Right ventricle myocardium inferior (tissue), 1 donor: ENCODE measurements at regions of chr2 and their contacts with region 1.

Region 1: DNA sequence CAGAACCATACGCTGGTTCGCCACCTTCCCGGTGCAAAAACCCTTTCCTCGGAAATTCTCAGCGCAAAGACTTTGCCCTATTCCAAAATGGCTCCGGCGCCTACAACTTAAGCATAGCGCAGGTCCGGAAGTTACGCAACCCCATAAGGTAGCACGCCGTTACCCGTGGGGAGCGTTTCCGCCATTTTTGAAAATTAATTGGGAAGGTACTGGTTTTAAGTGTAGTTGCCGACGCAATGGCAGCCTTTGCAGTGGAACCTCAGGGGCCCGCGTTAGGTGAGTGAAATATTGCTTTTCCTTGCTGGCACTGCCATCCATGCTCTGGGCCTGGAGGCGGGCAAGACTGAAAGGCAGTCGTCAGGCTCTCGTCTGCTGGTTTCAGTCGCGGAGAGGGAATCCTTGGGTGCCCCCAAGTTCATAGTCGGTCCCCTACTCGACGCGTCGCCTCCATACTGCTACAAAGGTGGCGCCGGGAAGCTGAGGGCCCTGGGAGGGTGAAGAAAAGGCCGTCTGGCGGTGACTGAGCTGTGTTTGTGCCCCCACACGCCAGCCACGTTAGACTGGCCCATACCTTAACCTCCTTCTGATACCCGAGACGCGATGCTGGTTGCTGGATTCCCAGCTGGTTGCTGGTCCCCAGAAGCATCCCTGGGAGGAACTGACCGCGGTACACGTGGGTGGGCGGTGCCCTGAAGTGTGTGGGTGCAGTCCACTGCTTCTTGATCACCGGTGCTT is at the start of gene NUP35:
- DNase-seq: peak; percentile 89
- ATAC-seq: peak; percentile 97
- total RNA-seq, gene NUP35: 8.0 TPM

Region 2: GRCh38 chr2:182642328-182642727 is 482.1 kb before region 1 on chr2:
- intact Hi-C with region 1: no loop called
- DNase-seq: peak; percentile 74
- ATAC-seq: peak; percentile 44

Region 3: GRCh38 chr2:183049420-183049819 is 75.0 kb before region 1 on chr2:
- intact Hi-C with region 1: no loop called
- DNase-seq: no peak
- ATAC-seq: no peak

Region 4: DNA sequence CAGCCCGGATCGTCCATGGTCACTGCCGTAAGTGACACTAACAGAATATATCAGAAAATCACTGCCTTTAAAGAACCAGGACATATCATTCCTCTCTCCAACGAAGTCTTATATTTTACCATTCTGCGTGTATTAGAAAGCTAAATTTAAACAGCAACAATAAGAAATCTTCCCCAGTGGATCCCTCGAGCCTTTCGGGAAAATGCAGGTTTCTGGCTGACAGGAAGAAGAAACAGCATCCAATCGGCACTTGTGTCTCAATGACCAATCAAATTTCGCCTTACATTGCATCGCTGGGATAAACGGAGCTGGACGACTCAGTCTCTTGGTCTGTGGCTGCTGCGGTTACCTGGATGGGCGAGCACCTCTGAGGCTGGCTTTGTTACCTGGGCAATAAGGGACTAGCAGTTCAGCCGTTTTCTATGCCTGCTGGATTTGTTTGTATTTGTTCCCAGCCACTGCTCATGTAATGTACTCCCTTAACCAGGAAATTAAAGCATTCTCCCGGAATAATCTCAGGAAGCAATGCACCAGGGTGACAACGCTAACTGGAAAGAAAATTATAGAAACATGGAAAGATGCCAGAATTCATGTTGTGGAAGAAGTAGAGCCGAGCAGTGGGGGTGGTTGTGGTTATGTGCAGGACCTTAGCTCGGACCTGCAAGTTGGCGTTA is 45.8 kb before region 1 on chr2 and contains the start of gene DUSP19:
- intact Hi-C with region 1: loop called (anchors 2 kb)
- DNase-seq: no peak
- ATAC-seq: peak; percentile 94
- total RNA-seq, gene DUSP19: 12.1 TPM

Region 5: DNA sequence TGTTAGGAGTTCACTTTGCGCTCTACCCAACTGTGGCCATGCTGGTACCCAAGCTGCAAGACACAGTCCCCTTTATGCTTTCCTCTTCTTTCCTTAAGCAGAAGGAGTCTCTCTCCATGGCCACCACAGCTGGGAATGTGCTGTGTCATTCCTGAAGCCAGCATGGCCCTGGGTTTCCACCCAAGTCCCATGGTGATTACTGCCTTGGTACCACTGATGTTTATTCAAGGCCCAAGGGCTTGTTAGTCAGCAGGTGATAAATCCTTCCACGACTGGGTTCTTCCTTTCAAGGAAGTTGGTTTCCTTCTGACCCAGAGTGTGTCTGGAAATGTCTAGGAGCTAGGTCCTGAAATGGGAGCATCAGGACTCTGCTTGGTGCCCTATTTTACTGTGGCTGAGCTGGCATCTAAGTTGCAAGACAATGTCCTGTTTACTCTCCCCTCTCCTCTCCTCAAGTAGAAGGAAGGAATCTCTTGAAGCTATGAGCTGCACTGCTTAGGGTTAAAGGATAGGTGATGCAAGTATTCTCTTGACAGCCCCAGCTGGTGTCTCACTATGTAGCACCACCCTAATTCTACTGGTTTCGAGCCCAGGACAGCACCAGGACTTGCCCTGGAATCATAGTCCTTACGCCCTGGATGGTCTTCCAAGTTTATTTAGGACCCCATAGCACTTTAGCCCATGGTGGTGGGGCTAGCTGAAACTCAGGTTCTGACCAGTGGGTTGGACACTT is 18.8 kb before region 1 on chr2:
- intact Hi-C with region 1: no loop called
- DNase-seq: no peak
- ATAC-seq: no peak